ENCODE measurements at regions of chr10 and their contacts with region 1.

Region 1: GRCh38 chr10:133329491-133330202 is 7.0 kb downstream of the CALY start:
- DNase-seq: peak; percentile 70
- ATAC-seq: peak; percentile 87
- H3K4me3 ChIP-seq: peak overlapping the region in 1 of 3 experiments; percentile 40; a peak in 2 of 6 replicates
- H3K27ac ChIP-seq: no peak overlapping the region
- H3K4me1 ChIP-seq: peaks cover 31% of the 10 kb centered on the region
- H3K27me3 ChIP-seq: peaks cover 7 to 73% of the 10 kb centered on the region in 2 experiments
- CTCF ChIP-seq: peak; percentile 92
- EP300 ChIP-seq: no peak
- POLR2A ChIP-seq: no peak
- RAD21 ChIP-seq: peak; percentile 92

Region 2: GRCh38 chr10:133196221-133196915 is 133.3 kb before region 1 on chr10:
- CTCF ChIA-PET with region 1: no interaction called
- POLR2A ChIA-PET with region 1: no interaction called
- in situ Hi-C with region 1: no loop called
- intact Hi-C with region 1: no loop called
- DNase-seq: no peak
- ATAC-seq: no peak
- H3K4me3 ChIP-seq: no peak overlapping the region
- H3K27ac ChIP-seq: no peak overlapping the region
- H3K4me1 ChIP-seq: no peaks in the 10 kb centered on the region
- H3K27me3 ChIP-seq: peaks cover 22 to 68% of the 10 kb centered on the region in 2 experiments; a peak in 4 of 5 replicates
- CTCF ChIP-seq: no peak
- EP300 ChIP-seq: no peak
- POLR2A ChIP-seq: no peak
- RAD21 ChIP-seq: no peak

Region 3: GRCh38 chr10:133373104-133373624 is 43.5 kb after region 1 on chr10 and contains the start of gene ECHS1:
- CTCF ChIA-PET with region 1: no interaction called
- POLR2A ChIA-PET with region 1: interaction called, 11 read pairs
- in situ Hi-C with region 1: no loop called
- intact Hi-C with region 1: loop called (anchors 10 kb)
- DNase-seq: peak; percentile 84
- ATAC-seq: peak; percentile 96
- H3K4me3 ChIP-seq: peak within 1 kb of the TSS; percentile 65 to 100 (median 91); a peak in 5 of 6 replicates
- H3K27ac ChIP-seq: peak within 1 kb of the TSS; percentile 66
- H3K4me1 ChIP-seq: peaks cover 35% of the 10 kb centered on the region
- H3K27me3 ChIP-seq: peaks cover 0 to 3% of the 10 kb centered on the region in 2 experiments; a peak in 1 of 5 replicates
- CTCF ChIP-seq: no peak
- EP300 ChIP-seq: no peak
- POLR2A ChIP-seq: peak in 1 of 2 experiments; percentile 86; a peak in 2 of 4 replicates
- RAD21 ChIP-seq: peak; percentile 49; the same call in 1 of the 2 replicates
- total RNA-seq, gene ECHS1: 195 and 233 TPM in 2 replicates

Region 4: DNA sequence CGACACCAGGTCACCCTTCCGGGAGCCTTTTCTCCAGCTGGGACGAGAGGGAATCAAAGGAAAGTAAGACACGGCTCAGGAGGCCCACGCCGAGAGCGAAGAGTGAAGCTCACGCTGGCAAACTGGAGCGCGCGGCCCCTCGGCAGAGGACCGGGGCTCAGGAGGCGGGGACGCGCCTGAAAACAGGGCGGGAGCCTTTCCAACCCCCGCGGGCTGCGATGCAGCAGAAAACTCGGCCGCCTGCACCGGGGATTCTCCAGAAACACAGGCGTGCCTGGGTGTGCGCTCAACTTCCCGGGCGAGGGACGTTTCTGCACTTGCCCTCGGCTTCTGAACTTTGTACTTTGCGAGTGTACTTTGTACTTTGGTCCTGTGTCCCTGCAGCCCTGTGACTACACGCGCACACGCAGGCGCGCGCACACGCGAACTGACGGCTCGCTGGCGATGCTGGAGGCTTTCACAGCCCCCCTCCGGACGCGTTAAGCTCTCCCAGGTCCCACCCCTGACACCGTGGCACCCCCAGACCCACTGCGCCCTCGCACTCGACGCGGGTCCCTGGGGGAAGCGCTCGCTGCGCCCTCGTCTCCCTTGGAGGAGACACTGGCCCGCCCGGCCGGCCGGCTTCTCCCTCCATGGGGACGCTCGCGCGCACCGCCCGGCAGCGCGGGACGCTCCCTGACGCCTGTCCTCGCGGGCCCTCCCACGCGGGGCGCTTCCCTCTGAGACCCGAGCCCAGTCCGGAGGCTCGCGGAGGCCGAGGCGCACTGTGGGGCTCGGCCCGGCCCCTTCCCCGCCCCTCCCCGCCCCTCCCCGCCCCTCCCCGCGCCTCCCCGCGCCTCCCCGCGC is 48.8 kb after region 1 on chr10:
- CTCF ChIA-PET with region 1: no interaction called
- POLR2A ChIA-PET with region 1: interaction called, 11 read pairs
- in situ Hi-C with region 1: no loop called
- intact Hi-C with region 1: loop called (anchors 10 kb)
- DNase-seq: peak; percentile 46
- ATAC-seq: peak; percentile 69
- H3K4me3 ChIP-seq: peak overlapping the region; percentile 56 to 86 (median 72)
- H3K27ac ChIP-seq: peak overlapping the region; percentile 82
- H3K4me1 ChIP-seq: peaks cover 25% of the 10 kb centered on the region
- H3K27me3 ChIP-seq: peaks cover 0 to 3% of the 10 kb centered on the region in 2 experiments; a peak in 1 of 5 replicates
- CTCF ChIP-seq: no peak
- EP300 ChIP-seq: peak in 1 of 2 experiments; percentile 52; a peak in 2 of 4 replicates
- POLR2A ChIP-seq: peak in 1 of 2 experiments; percentile 43; a peak in 1 of 4 replicates
- RAD21 ChIP-seq: no peak

Region 5: GRCh38 chr10:133394064-133394663 is 64.5 kb after region 1 on chr10 and contains the start of gene MTG1:
- CTCF ChIA-PET with region 1: no interaction called
- POLR2A ChIA-PET with region 1: no interaction called
- in situ Hi-C with region 1: no loop called
- intact Hi-C with region 1: loop called (anchors 2 kb)
- DNase-seq: peak; percentile 87
- ATAC-seq: peak; percentile 98
- H3K4me3 ChIP-seq: peak within 1 kb of the TSS; percentile 69 to 84 (median 79)
- H3K27ac ChIP-seq: peak within 1 kb of the TSS; percentile 82
- H3K4me1 ChIP-seq: peaks cover 19% of the 10 kb centered on the region
- H3K27me3 ChIP-seq: no peaks in the 10 kb centered on the region; a peak in 1 of 5 replicates
- CTCF ChIP-seq: peak; percentile 66
- EP300 ChIP-seq: 0 out of 4 replicates have a peak, but pooled peaks of 1 of the 2 experiments have one; percentile 4
- POLR2A ChIP-seq: peak; percentile 91 to 94
- RAD21 ChIP-seq: peak; percentile 73; the same call in 1 of the 2 replicates
- total RNA-seq, gene MTG1: 29.9 and 42.0 TPM in 2 replicates

Measured in HepG2 (cell line).